Activated naive CD8-positive, alpha-beta T cell treated with anti-CD3 and anti-CD28 coated beads, Interleukin-2, amount 10 ng/mL, durations not matched to agents 7 days and 5 days (primary cell): ENCODE measurements at regions of chr12 and their contacts with region 1.

Region 1: DNA sequence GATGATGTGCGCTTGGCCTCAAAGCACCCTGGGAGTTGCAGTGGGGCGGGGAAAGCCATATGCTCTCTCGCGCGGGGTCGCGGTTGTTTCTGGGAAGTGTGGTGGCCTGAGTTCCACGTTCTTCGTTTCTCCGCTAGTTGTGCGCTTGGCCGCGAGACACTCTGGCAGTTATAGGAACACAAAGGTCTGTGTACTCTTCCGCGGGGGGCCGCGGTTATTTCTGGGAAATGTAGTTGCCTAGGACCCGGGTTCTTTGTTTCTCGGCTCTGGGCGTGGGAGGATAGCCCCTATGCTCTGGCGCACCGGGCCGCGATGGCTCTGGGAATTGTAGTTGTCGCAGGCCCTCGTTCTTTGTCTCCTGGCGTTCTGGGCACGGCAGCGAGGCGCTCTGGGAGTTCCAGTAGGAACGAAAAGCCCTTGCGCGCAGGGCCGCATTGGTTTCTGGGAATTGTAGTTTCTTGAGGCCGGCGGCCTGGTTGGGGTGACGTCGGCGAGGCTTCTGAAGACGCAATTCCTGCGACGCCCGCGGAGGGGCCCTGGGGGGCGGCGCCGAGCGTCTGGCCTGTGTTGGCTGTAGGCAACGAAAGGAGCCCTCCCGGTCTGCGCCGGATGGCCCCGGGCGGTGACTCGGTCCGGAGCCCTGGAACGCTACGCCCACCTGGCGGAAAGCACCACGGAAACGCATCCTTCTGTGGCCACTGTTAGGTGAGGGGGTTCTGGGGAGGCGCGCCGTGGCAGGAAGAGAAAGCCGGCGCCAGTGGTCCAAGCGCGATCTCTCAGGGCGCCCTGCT is at the start of gene ZNF140:
- DNase-seq: peak; percentile 96
- ATAC-seq: peak; percentile 67
- H3K4me3 Mint-ChIP-seq: no peak within 1 kb of the TSS
- H3K27ac Mint-ChIP-seq: no peak within 1 kb of the TSS
- H3K4me1 Mint-ChIP-seq: peaks cover 4% of the 10 kb centered on the region
- H3K27me3 Mint-ChIP-seq: no peaks in the 10 kb centered on the region
- total RNA-seq, gene ZNF140: 18.2 to 19.8 TPM

Region 2: DNA sequence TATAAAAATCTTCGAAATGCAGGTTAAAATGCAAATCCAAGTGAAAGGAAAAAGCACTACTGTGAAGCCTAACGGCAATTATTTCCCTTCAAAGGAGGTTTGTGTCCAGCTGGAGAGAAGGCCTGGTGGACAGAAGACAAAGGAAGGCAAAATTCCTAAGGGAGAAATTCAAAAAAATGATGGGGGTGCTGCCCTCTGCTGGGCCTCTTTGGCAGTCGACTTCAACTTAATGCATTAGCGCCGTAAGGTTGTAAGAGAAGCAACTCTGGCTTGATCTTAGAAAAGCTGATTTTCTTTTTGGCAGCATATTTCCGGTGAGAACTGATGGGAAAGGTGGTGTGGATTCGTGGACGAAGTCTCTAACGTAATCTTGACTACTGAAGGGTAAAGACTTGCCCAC is 158.9 kb before region 1 on chr12:
- POLR2A ChIA-PET with region 1: no interaction called
- DNase-seq: no peak
- ATAC-seq: no peak
- H3K4me3 Mint-ChIP-seq: no peak overlapping the region
- H3K27ac Mint-ChIP-seq: no peak overlapping the region
- H3K4me1 Mint-ChIP-seq: no peaks in the 10 kb centered on the region
- H3K27me3 Mint-ChIP-seq: no peaks in the 10 kb centered on the region

Region 3: GRCh38 chr12:133181238-133181959 is 100.8 kb after region 1 on chr12 and contains the start of gene ZNF268:
- POLR2A ChIA-PET with region 1: interaction called, 29 read pairs
- DNase-seq: peak; percentile 91
- ATAC-seq: peak; percentile 90
- H3K4me3 Mint-ChIP-seq: peak within 1 kb of the TSS; percentile 95
- H3K27ac Mint-ChIP-seq: peak within 1 kb of the TSS; percentile 93
- H3K4me1 Mint-ChIP-seq: peaks cover 9% of the 10 kb centered on the region
- H3K27me3 Mint-ChIP-seq: no peaks in the 10 kb centered on the region
- total RNA-seq, gene ZNF268: 24.1 to 25.6 TPM